ENCODE measurements at regions of chr5 and their contacts with region 1.

Region 1: GRCh38 chr5:39202597-39203274 is 16.6 kb downstream of the FYB1 start:
- DNase-seq: peak; percentile 69
- ATAC-seq: peak; percentile 57
- H3K4me3 Mint-ChIP-seq: peak overlapping the region; percentile 86
- H3K27ac Mint-ChIP-seq: peak overlapping the region; percentile 86
- H3K4me1 Mint-ChIP-seq: peaks cover 41% of the 10 kb centered on the region
- H3K27me3 Mint-ChIP-seq: no peaks in the 10 kb centered on the region

Region 2: GRCh38 chr5:39164529-39165402 is 38.0 kb before region 1 on chr5:
- CTCF ChIA-PET with region 1: interaction called, 11 read pairs
- POLR2A ChIA-PET with region 1: interaction called, 4 read pairs
- DNase-seq: no peak
- ATAC-seq: peak; percentile 81
- H3K4me3 Mint-ChIP-seq: peak overlapping the region; percentile 69
- H3K27ac Mint-ChIP-seq: peak overlapping the region; percentile 84
- H3K4me1 Mint-ChIP-seq: peaks cover 86% of the 10 kb centered on the region
- H3K27me3 Mint-ChIP-seq: no peaks in the 10 kb centered on the region

Region 3: GRCh38 chr5:39274398-39275085 is 71.8 kb after region 1 on chr5:
- CTCF ChIA-PET with region 1: interaction called, 22 read pairs
- POLR2A ChIA-PET with region 1: interaction called, 5 read pairs
- DNase-seq: no peak
- ATAC-seq: peak; percentile 67
- H3K4me3 Mint-ChIP-seq: peak overlapping the region; percentile 78
- H3K27ac Mint-ChIP-seq: peak overlapping the region; percentile 96
- H3K4me1 Mint-ChIP-seq: peaks cover 52% of the 10 kb centered on the region
- H3K27me3 Mint-ChIP-seq: no peaks in the 10 kb centered on the region

Region 4: GRCh38 chr5:39355324-39355723 is 152.6 kb after region 1 on chr5:
- CTCF ChIA-PET with region 1: no interaction called
- POLR2A ChIA-PET with region 1: no interaction called
- DNase-seq: no peak
- ATAC-seq: no peak
- H3K4me3 Mint-ChIP-seq: no peak overlapping the region
- H3K27ac Mint-ChIP-seq: no peak overlapping the region
- H3K4me1 Mint-ChIP-seq: no peaks in the 10 kb centered on the region
- H3K27me3 Mint-ChIP-seq: no peaks in the 10 kb centered on the region